Activated T-helper 1 cell treated with anti-CD3 and anti-CD28 coated beads, Interleukin-12 subunit alpha, Interleukin-12 subunit beta, Interleukin-2, Interleukin-4 antibody, amounts not matched to agents 30 ng/mL and 10 ng/mL and 1 ng/mL, durations not matched to agents 14 hours and 24 hours and 36 hours (primary cell): ENCODE measurements at regions of chr2 and their contacts with region 1.

Region 1: GRCh38 chr2:64675860-64676259 is 22.1 kb upstream of the SERTAD2 start:
- DNase-seq: peak; percentile 30
- H3K4me3 Mint-ChIP-seq: no peak overlapping the region
- H3K27ac Mint-ChIP-seq: peak overlapping the region; percentile 56
- H3K4me1 Mint-ChIP-seq: peaks cover 48% of the 10 kb centered on the region
- H3K27me3 Mint-ChIP-seq: no peaks in the 10 kb centered on the region

Region 2: GRCh38 chr2:63993871-63994270 is 682.0 kb before region 1 on chr2:
- intact Hi-C with region 1: no loop called
- DNase-seq: no peak
- H3K4me3 Mint-ChIP-seq: no peak overlapping the region
- H3K27ac Mint-ChIP-seq: no peak overlapping the region
- H3K4me1 Mint-ChIP-seq: peaks cover 9% of the 10 kb centered on the region
- H3K27me3 Mint-ChIP-seq: no peaks in the 10 kb centered on the region

Region 3: DNA sequence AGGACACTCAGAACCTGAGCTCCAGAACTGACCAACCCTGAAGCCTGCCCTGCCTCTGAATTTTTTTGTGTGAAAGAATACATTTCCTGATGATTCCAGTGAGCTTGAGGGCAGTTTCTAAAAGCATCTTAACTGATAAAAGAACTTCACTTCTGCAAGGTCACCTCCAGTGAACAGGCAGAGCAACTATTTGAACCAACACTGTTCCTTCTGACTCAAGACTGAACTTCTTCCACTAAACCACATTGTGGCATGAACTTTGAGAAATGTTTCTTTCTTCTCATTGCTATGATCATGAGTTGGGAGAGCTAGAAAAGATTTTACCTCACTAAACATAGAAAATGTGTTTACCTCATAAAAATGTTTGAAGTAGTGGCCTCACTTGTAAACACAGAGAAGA is 61.7 kb after region 1 on chr2:
- intact Hi-C with region 1: loop called (anchors 1 kb)
- DNase-seq: no peak
- H3K4me3 Mint-ChIP-seq: peak overlapping the region; percentile 46
- H3K27ac Mint-ChIP-seq: peak overlapping the region; percentile 91
- H3K4me1 Mint-ChIP-seq: peaks cover 54% of the 10 kb centered on the region
- H3K27me3 Mint-ChIP-seq: no peaks in the 10 kb centered on the region